H1 (cell line): ENCODE measurements at regions of chr12 and their contacts with region 1.

Region 1: GRCh38 chr12:48119078-48119833 is at the start of gene PFKM:
- DNase-seq: peak; percentile 86 to 89
- H3K4me3 ChIP-seq: peak within 1 kb of the TSS; percentile 66 to 95 (median 93)
- H3K27ac ChIP-seq: peak within 1 kb of the TSS; percentile 87
- H3K4me1 ChIP-seq: peaks cover 0 to 7% (median 2%) of the 10 kb centered on the region in 4 experiments; a peak in 2 of 7 replicates
- H3K27me3 ChIP-seq: no peaks in the 10 kb centered on the region
- CTCF ChIP-seq: no peak
- EP300 ChIP-seq: no peak
- POLR2A ChIP-seq: peak; percentile 60 to 78
- RAD21 ChIP-seq: no peak
- total RNA-seq, gene PFKM: 106 and 109 TPM in 2 replicates

Region 2: GRCh38 chr12:48105862-48106680 is 13.2 kb before region 1 on chr12 and contains the start of gene SENP1:
- CTCF ChIA-PET with region 1: interaction called, 5 read pairs
- POLR2A ChIA-PET with region 1: interaction called, 56 read pairs
- DNase-seq: peak; percentile 51 to 94
- H3K4me3 ChIP-seq: peak within 1 kb of the TSS; percentile 93 to 99 (median 96)
- H3K27ac ChIP-seq: peak within 1 kb of the TSS; percentile 99
- H3K4me1 ChIP-seq: peaks cover 0 to 6% (median 3%) of the 10 kb centered on the region in 4 experiments; a peak in 4 of 7 replicates
- H3K27me3 ChIP-seq: peaks cover 0 to 5% (median 0%) of the 10 kb centered on the region in 4 experiments; a peak in 2 of 7 replicates
- CTCF ChIP-seq: no peak
- EP300 ChIP-seq: peak in 1 of 2 experiments; percentile 59; a peak in 1 of 3 replicates
- POLR2A ChIP-seq: peak; percentile 59 to 97
- RAD21 ChIP-seq: no peak
- total RNA-seq, gene SENP1: 29.8 and 31.5 TPM in 2 replicates

Region 3: GRCh38 chr12:48142818-48143674 is 23.8 kb after region 1 on chr12:
- CTCF ChIA-PET with region 1: no interaction called
- POLR2A ChIA-PET with region 1: interaction called, 16 read pairs
- DNase-seq: peak in 1 of 2 experiments; percentile 51
- H3K4me3 ChIP-seq: peak overlapping the region in 1 of 4 experiments; percentile 34; a peak in 2 of 8 replicates
- H3K27ac ChIP-seq: peak overlapping the region; percentile 56; the same call in 1 of the 2 replicates
- H3K4me1 ChIP-seq: peaks cover 9 to 24% (median 18%) of the 10 kb centered on the region in 4 experiments
- H3K27me3 ChIP-seq: no peaks in the 10 kb centered on the region
- CTCF ChIP-seq: no peak
- EP300 ChIP-seq: no peak
- POLR2A ChIP-seq: 0 out of 3 replicates have a peak, but pooled peaks of 1 of the 2 experiments have one; percentile 38
- RAD21 ChIP-seq: no peak

Region 4: GRCh38 chr12:48157018-48157888 is 38.0 kb after region 1 on chr12 and contains the start of gene ASB8:
- CTCF ChIA-PET with region 1: interaction called, 4 read pairs
- POLR2A ChIA-PET with region 1: interaction called, 12 read pairs
- DNase-seq: peak; percentile 96 to 99
- H3K4me3 ChIP-seq: peak within 1 kb of the TSS; percentile 86 to 94 (median 92)
- H3K27ac ChIP-seq: no peak within 1 kb of the TSS
- H3K4me1 ChIP-seq: peaks cover 0 to 5% (median under 1%) of the 10 kb centered on the region in 4 experiments; a peak in 2 of 7 replicates
- H3K27me3 ChIP-seq: no peaks in the 10 kb centered on the region
- CTCF ChIP-seq: peak; percentile 44 to 60 (median 46)
- EP300 ChIP-seq: no peak
- POLR2A ChIP-seq: peak in 1 of 2 experiments; percentile 64; a peak in 1 of 3 replicates
- RAD21 ChIP-seq: peak; percentile 22 to 40; a peak in 3 of 4 replicates
- total RNA-seq, gene ASB8: 8.1 and 8.3 TPM in 2 replicates